Activated CD4-positive, alpha-beta memory T cell treated with anti-CD3 and anti-CD28 coated beads, Interleukin-2, amount 10 ng/mL, durations not matched to agents 7 days and 5 days (primary cell): ENCODE measurements at regions of chr5 and their contacts with region 1.

Region 1: DNA sequence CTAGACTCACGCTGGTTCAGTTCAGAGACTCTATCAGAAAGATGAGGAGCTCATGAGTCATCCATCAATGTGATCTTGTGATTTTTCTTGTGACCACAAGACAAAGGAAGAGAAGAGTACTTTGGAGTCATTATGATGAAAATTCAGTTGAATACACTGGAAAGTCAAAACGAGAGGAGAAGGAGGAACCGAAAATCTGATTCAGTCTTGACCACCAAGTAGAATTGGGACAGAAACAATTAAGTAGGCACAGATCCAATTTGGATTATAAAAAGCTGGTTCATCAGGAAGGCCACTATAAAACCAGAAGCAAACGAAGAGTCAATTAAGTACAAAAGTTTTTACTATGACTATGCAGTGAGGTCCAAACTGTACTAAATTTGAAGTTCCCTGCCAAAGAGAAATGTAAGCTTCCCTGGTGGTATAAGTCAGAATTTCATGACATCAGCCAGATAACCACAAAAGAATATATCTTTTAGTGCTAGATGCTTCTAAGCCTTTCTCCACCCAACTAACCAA is 90.9 kb downstream of the THBS4 start:
- DNase-seq: no peak
- H3K4me3 Mint-ChIP-seq: peak overlapping the region; percentile 1
- H3K27ac Mint-ChIP-seq: peak overlapping the region; percentile 75
- H3K4me1 Mint-ChIP-seq: peaks cover 38% of the 10 kb centered on the region
- H3K27me3 Mint-ChIP-seq: no peaks in the 10 kb centered on the region

Region 2: DNA sequence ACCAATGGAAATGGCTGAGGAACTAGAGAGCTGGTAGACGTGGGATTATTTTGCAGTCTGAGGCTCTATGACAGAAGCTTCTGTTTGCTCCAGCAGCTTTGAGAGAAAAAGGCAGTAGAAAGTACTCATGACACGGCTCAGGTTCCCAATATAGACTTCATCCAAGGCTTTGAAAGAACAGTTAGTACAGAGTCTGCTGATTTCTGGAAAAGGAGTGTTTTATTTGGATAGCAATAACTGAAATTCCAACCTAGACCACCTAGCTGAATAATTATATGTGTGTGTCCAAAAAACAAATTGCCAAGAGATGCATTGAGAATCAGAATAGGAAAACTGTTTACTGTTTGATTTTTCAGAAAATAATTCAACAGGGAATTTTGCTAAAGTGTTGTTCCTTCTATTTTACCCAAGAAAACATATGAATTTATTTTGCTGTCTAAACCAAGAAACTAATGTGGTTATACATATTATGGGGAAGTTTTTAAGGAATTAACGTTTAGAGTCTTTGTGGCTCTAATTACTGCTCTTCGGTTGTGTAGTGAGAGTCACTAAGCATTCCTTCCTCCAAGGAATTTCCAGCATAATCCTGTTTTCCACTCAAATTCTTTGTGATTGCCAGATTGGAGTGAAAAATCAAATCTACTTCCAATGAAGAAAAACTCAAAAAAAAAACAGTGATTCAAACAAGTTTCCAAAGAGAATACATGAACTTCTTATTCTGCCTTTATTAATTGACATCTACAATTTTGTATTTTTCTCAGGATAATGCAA is 116.8 kb before region 1 on chr5:
- CTCF ChIA-PET with region 1: no interaction called
- POLR2A ChIA-PET with region 1: no interaction called
- DNase-seq: no peak
- H3K4me3 Mint-ChIP-seq: no peak overlapping the region
- H3K27ac Mint-ChIP-seq: no peak overlapping the region
- H3K4me1 Mint-ChIP-seq: peaks cover 2% of the 10 kb centered on the region
- H3K27me3 Mint-ChIP-seq: no peaks in the 10 kb centered on the region

Region 3: GRCh38 chr5:80246001-80246758 is 120.2 kb after region 1 on chr5:
- CTCF ChIA-PET with region 1: no interaction called
- POLR2A ChIA-PET with region 1: interaction called, 11 read pairs
- DNase-seq: no peak
- H3K4me3 Mint-ChIP-seq: peak overlapping the region; percentile 42
- H3K27ac Mint-ChIP-seq: peak overlapping the region; percentile 83
- H3K4me1 Mint-ChIP-seq: peaks cover 59% of the 10 kb centered on the region
- H3K27me3 Mint-ChIP-seq: no peaks in the 10 kb centered on the region

Region 4: GRCh38 chr5:80284720-80285119 is 158.7 kb after region 1 on chr5:
- CTCF ChIA-PET with region 1: no interaction called
- POLR2A ChIA-PET with region 1: no interaction called
- DNase-seq: peak; percentile 26
- H3K4me3 Mint-ChIP-seq: no peak overlapping the region
- H3K27ac Mint-ChIP-seq: peak overlapping the region; percentile 40
- H3K4me1 Mint-ChIP-seq: peaks cover 12% of the 10 kb centered on the region
- H3K27me3 Mint-ChIP-seq: peaks cover 1% of the 10 kb centered on the region